ENCODE measurements at regions of chr2 and their contacts with region 1.

Region 1: DNA sequence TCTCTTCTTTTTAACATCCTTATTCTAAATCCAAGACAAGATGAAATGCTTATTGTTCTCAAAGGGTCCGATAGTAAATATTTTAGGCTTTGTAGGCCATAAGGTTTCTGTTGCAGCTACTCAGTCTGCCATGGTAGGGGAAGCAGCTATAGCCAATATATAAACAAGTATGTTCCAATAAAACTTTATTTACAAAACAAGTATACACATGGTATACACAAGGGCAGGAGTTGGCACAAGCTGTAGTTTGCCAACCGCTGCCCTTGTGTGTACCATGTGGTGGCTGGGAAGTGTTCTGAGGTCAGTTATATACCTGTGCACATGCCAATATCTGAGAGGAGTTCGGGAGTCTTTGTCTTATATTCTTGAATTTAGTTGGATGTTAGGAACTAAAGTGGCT is 126.0 kb upstream of the DNMT3A start:
- DNase-seq: no peak
- H3K4me3 ChIP-seq: no peak overlapping the region
- H3K27ac ChIP-seq: no peak overlapping the region
- H3K4me1 ChIP-seq: no peaks in the 10 kb centered on the region
- H3K27me3 ChIP-seq: no peaks in the 10 kb centered on the region
- CTCF ChIP-seq: no peak
- POLR2A ChIP-seq: no peak

Region 2: GRCh38 chr2:24855726-24856125 is 612.0 kb before region 1 on chr2:
- intact Hi-C with region 1: no loop called
- DNase-seq: no peak
- H3K4me3 ChIP-seq: no peak overlapping the region
- H3K27ac ChIP-seq: peak overlapping the region; percentile 40 to 88
- H3K4me1 ChIP-seq: peaks cover 0 to 9% of the 10 kb centered on the region in 2 donors
- H3K27me3 ChIP-seq: no peaks in the 10 kb centered on the region
- CTCF ChIP-seq: no peak
- POLR2A ChIP-seq: no peak

Region 3: DNA sequence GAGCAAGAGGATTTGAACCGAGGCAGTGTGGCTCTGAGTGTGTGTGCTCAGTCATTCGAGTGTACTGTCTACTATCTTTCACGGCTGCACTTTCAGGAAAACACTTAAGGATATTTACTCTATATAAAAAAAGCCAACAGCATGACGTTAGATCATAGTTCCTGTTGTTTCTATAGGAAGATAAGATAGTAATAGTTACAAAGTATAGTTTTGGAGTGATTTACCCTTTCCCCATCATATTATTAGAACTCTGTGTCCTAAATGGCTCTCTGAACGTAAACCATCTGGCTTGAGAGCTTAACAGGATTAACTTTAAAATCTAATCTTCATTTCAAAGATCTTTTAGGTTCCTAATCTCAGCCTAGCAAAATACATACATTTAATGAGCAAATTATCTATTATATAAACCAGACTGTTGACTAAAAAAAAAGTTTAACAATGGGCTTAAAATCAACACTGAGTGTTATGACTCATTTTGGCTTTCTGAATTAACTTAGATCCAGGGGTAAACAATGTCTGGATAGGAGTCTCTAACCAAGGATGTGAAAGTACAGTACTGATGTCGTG is 24.3 kb after region 1 on chr2:
- intact Hi-C with region 1: loop called (anchors 1 kb)
- DNase-seq: no peak
- H3K4me3 ChIP-seq: no peak overlapping the region
- H3K27ac ChIP-seq: no peak overlapping the region
- H3K4me1 ChIP-seq: no peaks in the 10 kb centered on the region
- H3K27me3 ChIP-seq: no peaks in the 10 kb centered on the region
- CTCF ChIP-seq: no peak
- POLR2A ChIP-seq: no peak